Transverse colon (tissue), 4 donors: ENCODE measurements at regions of chr11 and their contacts with region 1.

Region 1: DNA sequence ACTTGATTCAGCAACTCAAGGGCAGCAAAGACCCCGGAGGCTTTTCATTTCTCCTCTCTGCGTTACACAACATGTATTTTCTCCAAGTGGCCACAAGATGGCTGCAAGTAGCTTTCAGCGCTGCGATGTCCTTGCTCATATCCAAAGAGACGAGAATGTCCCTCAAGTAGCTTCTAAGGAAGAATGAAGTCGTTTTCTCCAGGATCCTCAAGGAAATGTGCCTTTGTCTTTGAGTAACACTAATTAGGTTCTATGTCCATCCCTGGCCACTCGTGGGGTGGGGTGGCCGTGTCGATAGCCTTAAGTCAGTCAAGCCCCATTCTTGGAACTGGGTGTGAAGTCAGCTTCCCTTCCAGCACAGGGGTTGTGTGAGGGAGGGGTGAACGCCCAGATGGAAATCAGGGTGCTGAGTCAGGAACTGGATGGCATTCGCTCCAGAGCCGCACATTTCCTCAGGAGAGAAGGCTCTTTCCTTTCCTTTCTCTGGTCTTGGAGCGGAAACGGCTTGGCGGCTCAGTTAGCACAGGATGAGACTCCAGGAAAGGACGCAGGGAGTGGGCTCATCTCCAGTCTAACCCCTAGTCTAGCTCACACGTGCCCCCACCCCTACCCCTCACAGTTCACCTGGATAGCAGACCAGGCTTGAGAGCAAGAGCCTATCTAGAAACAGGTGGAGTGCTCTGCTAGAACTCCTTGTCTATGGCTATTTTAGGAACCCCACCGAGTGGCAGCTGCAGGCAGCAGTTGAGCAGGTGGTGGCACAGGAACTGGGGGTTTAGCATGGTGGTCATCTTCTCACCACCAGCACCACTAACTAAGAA is 44.3 kb downstream of the NNMT start:
- DNase-seq: peak; percentile 37
- H3K4me3 ChIP-seq: peak overlapping the region in 1 of 4 donors; percentile 23
- H3K27ac ChIP-seq: peak overlapping the region in 2 of 4 donors; percentile 4 to 30
- H3K4me1 ChIP-seq: peaks cover 0 to 10% (median 8%) of the 10 kb centered on the region in 4 donors
- H3K27me3 ChIP-seq: no peaks in the 10 kb centered on the region
- CTCF ChIP-seq: peak; percentile 76 to 82 (median 78)
- EP300 ChIP-seq: no peak
- POLR2A ChIP-seq: no peak

Region 2: GRCh38 chr11:114262681-114263512 is 77.6 kb before region 1 on chr11:
- in situ Hi-C with region 1: no loop called
- intact Hi-C with region 1: no loop called
- DNase-seq: no peak
- H3K4me3 ChIP-seq: no peak overlapping the region
- H3K27ac ChIP-seq: no peak overlapping the region
- H3K4me1 ChIP-seq: peaks cover 0 to 32% (median 16%) of the 10 kb centered on the region in 4 donors
- H3K27me3 ChIP-seq: peaks cover 9% of the 10 kb centered on the region
- CTCF ChIP-seq: peak; percentile 56 to 67 (median 62)
- EP300 ChIP-seq: no peak
- POLR2A ChIP-seq: no peak

Region 3: DNA sequence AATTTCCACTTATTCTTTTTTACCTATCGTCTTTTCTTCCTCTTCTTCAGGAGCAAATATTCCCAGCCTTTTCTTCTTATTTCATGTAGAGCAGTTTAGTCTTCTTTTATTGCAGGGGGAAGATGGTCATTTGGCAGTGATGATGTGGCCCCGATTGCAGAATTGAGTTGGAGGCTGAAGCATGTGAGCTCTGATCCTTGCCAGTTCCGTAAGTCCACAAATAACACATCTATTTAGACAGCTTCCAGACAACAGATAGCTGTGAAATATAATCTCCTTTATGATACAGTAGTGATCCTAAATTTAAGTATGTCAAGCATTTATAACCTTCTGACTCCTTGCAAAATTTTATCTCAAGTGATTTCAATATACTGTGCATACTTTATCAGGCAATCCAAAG is 126.2 kb after region 1 on chr11:
- in situ Hi-C with region 1: no loop called
- intact Hi-C with region 1: no loop called
- DNase-seq: no peak
- H3K4me3 ChIP-seq: no peak overlapping the region
- H3K27ac ChIP-seq: no peak overlapping the region
- H3K4me1 ChIP-seq: no peaks in the 10 kb centered on the region
- H3K27me3 ChIP-seq: no peaks in the 10 kb centered on the region
- CTCF ChIP-seq: no peak
- EP300 ChIP-seq: no peak
- POLR2A ChIP-seq: no peak

Region 4: GRCh38 chr11:114586797-114587196 is 246.3 kb after region 1 on chr11:
- in situ Hi-C with region 1: loop called in 2 of 4 experiments (anchors 25 kb)
- intact Hi-C with region 1: no loop called
- DNase-seq: no peak
- H3K4me3 ChIP-seq: no peak overlapping the region
- H3K27ac ChIP-seq: no peak overlapping the region
- H3K4me1 ChIP-seq: no peaks in the 10 kb centered on the region
- H3K27me3 ChIP-seq: no peaks in the 10 kb centered on the region
- CTCF ChIP-seq: no peak
- EP300 ChIP-seq: no peak
- POLR2A ChIP-seq: no peak

Region 5: DNA sequence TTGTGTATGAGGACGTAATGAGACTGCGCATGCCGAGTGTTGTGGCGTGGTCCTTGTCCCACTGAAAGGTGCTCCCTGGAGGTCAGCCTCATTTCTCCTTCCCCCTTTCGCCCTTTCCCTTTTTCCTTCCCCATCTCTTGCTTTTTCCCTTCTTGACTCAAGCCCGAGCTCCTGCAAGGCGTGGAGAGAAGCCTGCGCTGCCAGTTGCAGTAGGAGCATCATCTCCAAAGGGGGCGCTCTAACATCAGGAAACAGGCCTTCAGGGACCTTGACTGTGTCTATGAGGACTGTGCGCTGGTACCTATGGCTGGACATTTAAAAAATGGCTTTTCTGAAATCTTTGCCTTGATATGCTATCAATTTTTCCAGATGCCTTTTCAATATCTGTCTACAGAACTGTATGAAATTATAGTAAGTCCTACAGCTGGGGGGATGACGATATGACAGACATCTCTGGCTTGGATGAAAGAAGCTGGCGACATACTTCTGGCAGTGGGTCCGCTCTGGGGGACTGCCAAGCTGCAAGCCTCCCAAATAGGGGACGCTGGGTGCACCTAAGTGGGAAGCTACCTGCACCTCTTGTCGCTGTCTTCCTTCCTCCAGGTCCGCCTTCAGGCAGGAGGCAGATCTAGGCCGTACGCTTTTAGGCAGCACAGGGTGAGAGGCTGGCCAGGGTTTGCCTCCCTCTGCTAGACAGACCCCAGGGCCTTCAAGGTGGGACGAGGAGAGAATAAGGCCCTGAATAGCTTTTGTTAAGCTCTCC is 434.3 kb after region 1 on chr11:
- in situ Hi-C with region 1: loop called in 2 of 4 experiments (anchors 10 to 25 kb)
- intact Hi-C with region 1: loop called (anchors 10 kb)
- DNase-seq: peak; percentile 58
- H3K4me3 ChIP-seq: no peak overlapping the region
- H3K27ac ChIP-seq: no peak overlapping the region
- H3K4me1 ChIP-seq: no peaks in the 10 kb centered on the region
- H3K27me3 ChIP-seq: no peaks in the 10 kb centered on the region
- CTCF ChIP-seq: peak; percentile 39 to 60 (median 58)
- EP300 ChIP-seq: no peak
- POLR2A ChIP-seq: no peak